ENCODE measurements at regions of chr7 and their contacts with region 1.

Region 1: GRCh38 chr7:45136106-45137060 is 21.2 kb upstream of the RAMP3 start:
- DNase-seq: peak; percentile 86
- CTCF ChIP-seq: peak; percentile 78

Region 2: GRCh38 chr7:44581879-44582603 is 554.3 kb before region 1 on chr7 and contains the start of gene TMED4:
- in situ Hi-C with region 1: loop called (anchors 10 kb)
- DNase-seq: peak; percentile 100
- CTCF ChIP-seq: no peak

Region 3: DNA sequence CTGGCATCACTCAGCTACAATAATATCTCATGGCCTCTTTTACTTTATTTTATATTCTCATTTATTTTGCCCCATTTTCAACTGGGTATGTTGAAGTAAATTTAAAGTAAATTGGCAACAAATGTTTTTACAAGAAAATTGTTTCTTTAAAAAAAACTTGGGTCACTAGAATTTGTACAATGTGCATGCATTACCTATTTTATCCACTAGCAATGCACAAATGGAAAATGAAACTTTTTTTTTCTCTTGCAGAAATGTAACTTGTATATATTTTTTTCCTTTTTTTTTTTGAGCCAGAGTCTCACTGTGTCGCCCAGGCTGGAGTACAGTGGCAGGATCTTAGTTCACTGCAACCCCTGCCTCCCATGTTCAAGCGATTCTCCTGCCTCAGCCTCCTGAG is 278.2 kb before region 1 on chr7:
- in situ Hi-C with region 1: loop called (anchors 5 kb)
- DNase-seq: no peak
- CTCF ChIP-seq: no peak

Measured in GM13976 (cell line).